ENCODE measurements at regions of chr3 and their contacts with region 1.

Region 1: DNA sequence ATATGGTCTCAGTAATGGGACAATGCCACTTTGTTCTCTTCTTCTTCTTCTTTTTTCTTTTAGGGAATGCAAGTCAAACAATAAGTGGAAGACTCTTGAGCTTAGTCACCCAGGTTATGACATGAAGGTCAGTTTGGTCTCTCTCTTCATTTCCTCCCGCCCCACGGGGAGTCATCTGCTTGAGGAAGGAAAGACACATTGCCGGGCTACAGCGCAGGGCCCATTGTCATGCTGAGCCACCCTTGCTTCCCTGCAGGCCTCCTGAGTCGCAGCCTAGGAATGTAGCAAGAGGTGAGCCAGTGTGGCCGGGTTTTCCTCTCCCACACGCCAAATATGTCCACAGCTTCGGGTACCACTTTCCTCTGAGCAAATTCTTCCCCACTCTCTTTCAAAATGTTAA is 47.6 kb downstream of the RAP2B start:
- DNase-seq: no peak
- H3K4me3 ChIP-seq: no peak overlapping the region
- H3K4me3 Mint-ChIP-seq: peak overlapping the region in 6 of 8 donors; percentile 59 to 80 (median 72)
- H3K27ac ChIP-seq: no peak overlapping the region
- H3K27ac Mint-ChIP-seq: peak overlapping the region in 5 of 7 donors; percentile 54 to 85 (median 72)
- H3K4me1 ChIP-seq: peaks cover 20% of the 10 kb centered on the region
- H3K4me1 Mint-ChIP-seq: peaks cover 26 to 42% (median 33%) of the 10 kb centered on the region in 4 donors
- H3K27me3 ChIP-seq: no peaks in the 10 kb centered on the region
- H3K27me3 Mint-ChIP-seq: no peaks in the 10 kb centered on the region

Region 2: DNA sequence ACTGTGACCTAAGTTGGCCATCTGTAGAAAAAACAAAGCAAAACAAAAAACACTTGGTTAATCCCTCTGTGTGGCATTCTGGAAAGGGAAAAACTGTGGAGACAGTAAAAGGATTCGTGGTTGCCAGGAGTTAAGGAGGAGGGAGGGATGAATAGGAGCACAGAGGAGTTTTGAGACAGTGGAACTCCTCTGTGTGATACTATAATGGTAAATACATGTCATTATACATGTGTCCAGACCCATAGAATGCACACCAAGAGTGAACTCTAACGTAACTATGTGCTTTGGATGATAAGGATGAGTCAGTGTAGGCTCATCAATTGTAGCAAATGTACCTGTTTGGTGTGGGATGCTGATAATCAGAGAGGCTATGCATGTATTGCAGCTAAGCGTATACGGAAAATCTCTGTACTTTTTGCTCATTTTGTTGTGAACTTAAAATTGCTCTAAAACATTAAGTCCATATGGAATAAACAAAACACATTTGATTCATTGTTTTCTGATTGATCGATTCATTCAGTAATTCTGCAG is 14.2 kb before region 1 on chr3:
- CTCF ChIA-PET with region 1: interaction called, 17 read pairs
- POLR2A ChIA-PET with region 1: no interaction called
- intact Hi-C with region 1: no loop called
- DNase-seq: no peak
- H3K4me3 ChIP-seq: no peak overlapping the region
- H3K4me3 Mint-ChIP-seq: no peak overlapping the region
- H3K27ac ChIP-seq: no peak overlapping the region
- H3K27ac Mint-ChIP-seq: no peak overlapping the region
- H3K4me1 ChIP-seq: no peaks in the 10 kb centered on the region
- H3K4me1 Mint-ChIP-seq: peaks cover 0 to 7% (median 5%) of the 10 kb centered on the region in 4 donors
- H3K27me3 ChIP-seq: no peaks in the 10 kb centered on the region
- H3K27me3 Mint-ChIP-seq: no peaks in the 10 kb centered on the region

Region 3: GRCh38 chr3:153252963-153253362 is 43.4 kb after region 1 on chr3:
- CTCF ChIA-PET with region 1: interaction called, 10 read pairs
- POLR2A ChIA-PET with region 1: interaction called, 4 read pairs
- intact Hi-C with region 1: no loop called
- DNase-seq: no peak
- H3K4me3 ChIP-seq: no peak overlapping the region
- H3K4me3 Mint-ChIP-seq: no peak overlapping the region
- H3K27ac ChIP-seq: no peak overlapping the region
- H3K27ac Mint-ChIP-seq: no peak overlapping the region
- H3K4me1 ChIP-seq: peaks cover 9% of the 10 kb centered on the region
- H3K4me1 Mint-ChIP-seq: peaks cover 16 to 39% (median 29%) of the 10 kb centered on the region in 4 donors
- H3K27me3 ChIP-seq: no peaks in the 10 kb centered on the region
- H3K27me3 Mint-ChIP-seq: no peaks in the 10 kb centered on the region

Region 4: GRCh38 chr3:153284282-153284938 is 74.8 kb after region 1 on chr3:
- CTCF ChIA-PET with region 1: interaction called, 23 read pairs
- POLR2A ChIA-PET with region 1: interaction called, 9 read pairs
- intact Hi-C with region 1: no loop called
- DNase-seq: peak; percentile 42 to 59 (median 50)
- H3K4me3 ChIP-seq: no peak overlapping the region
- H3K4me3 Mint-ChIP-seq: peak overlapping the region in 7 of 8 donors; percentile 57 to 81 (median 65)
- H3K27ac ChIP-seq: peak overlapping the region; percentile 20
- H3K27ac Mint-ChIP-seq: peak overlapping the region; percentile 74 to 97 (median 91)
- H3K4me1 ChIP-seq: peaks cover 51% of the 10 kb centered on the region
- H3K4me1 Mint-ChIP-seq: peaks cover 34 to 49% (median 43%) of the 10 kb centered on the region in 4 donors
- H3K27me3 ChIP-seq: no peaks in the 10 kb centered on the region
- H3K27me3 Mint-ChIP-seq: no peaks in the 10 kb centered on the region

Measured in CD4-positive, alpha-beta memory T cell (primary cell).